B cell (primary cell): ENCODE measurements at regions of chr19 and their contacts with region 1.

Region 1: DNA sequence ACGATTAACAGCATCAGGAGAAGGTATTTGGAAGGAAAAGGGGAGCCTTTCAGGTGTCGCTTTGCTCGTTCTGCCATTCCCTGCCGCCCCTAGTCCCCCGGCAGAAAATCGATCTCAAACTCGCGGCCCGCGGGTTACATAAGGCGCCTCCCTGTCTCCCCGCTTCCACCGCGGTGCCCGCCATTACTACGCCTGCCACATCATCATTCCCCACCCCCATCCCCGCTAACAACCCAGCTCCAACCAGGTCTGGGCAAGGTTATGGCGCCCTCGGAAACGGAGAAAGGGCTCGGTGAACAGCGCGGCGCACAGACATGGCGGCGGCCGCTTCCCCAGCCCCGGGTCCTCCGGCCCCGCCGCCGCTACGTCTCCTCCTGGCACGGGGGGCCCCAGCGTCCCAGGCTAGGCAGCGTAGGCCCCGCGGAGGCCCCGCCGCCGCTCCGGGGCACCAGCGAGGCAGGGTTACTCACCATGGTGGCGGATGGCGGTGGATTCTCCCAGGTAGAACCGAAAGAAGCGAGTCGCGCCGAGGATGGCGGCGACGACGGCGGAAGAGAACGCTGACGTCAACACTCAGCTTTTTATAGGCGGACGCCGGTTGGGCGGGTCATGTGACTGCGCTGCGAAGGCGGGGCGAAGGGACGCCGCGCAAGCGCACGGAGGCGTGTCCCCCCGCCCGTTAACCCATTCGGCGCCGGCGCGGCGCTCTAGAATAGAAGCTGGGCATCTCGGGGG is at the start of gene EEF2:
- DNase-seq: peak; percentile 97
- ATAC-seq: peak; percentile 56
- H3K4me3 ChIP-seq: peak within 1 kb of the TSS; percentile 66 to 93 (median 75)
- H3K4me3 Mint-ChIP-seq: peak within 1 kb of the TSS; percentile 98
- H3K27ac ChIP-seq: peak within 1 kb of the TSS; percentile 78 to 90
- H3K27ac Mint-ChIP-seq: peak within 1 kb of the TSS; percentile 97
- H3K4me1 ChIP-seq: peaks cover 40 to 57% of the 10 kb centered on the region in 2 donors
- H3K4me1 Mint-ChIP-seq: peaks cover 62% of the 10 kb centered on the region
- H3K27me3 ChIP-seq: no peaks in the 10 kb centered on the region
- H3K27me3 Mint-ChIP-seq: no peaks in the 10 kb centered on the region
- CTCF ChIP-seq: no peak
- total RNA-seq, gene EEF2: 2,947 and 3,167 TPM in 2 replicates

Region 2: DNA sequence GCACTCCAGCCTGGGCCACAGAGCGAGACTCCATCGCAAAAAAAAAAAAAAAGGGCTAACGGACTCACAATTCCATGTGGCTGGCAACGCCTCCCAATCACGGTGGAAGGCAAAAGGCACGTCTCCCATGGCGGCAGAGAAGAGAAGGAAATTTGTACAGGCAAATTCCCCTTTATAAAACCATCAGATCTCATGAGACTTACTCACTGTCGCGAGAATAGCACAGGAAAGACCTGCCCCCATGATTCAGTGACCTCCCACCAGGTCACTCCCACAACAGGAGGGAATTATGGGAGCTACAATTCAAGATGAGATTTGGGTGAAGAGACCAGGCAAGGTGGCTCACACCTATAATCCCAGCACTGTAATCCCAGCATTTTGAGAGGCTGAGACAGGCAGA is 70.9 kb before region 1 on chr19:
- CTCF ChIA-PET with region 1: no interaction called
- POLR2A ChIA-PET with region 1: no interaction called
- intact Hi-C with region 1: no loop called
- DNase-seq: no peak
- ATAC-seq: no peak
- H3K4me3 ChIP-seq: no peak overlapping the region
- H3K4me3 Mint-ChIP-seq: no peak overlapping the region
- H3K27ac ChIP-seq: no peak overlapping the region
- H3K27ac Mint-ChIP-seq: no peak overlapping the region
- H3K4me1 ChIP-seq: peaks cover 0 to 4% of the 10 kb centered on the region in 2 donors
- H3K4me1 Mint-ChIP-seq: peaks cover 4% of the 10 kb centered on the region
- H3K27me3 ChIP-seq: no peaks in the 10 kb centered on the region
- H3K27me3 Mint-ChIP-seq: peaks cover 9% of the 10 kb centered on the region
- CTCF ChIP-seq: no peak

Region 3: DNA sequence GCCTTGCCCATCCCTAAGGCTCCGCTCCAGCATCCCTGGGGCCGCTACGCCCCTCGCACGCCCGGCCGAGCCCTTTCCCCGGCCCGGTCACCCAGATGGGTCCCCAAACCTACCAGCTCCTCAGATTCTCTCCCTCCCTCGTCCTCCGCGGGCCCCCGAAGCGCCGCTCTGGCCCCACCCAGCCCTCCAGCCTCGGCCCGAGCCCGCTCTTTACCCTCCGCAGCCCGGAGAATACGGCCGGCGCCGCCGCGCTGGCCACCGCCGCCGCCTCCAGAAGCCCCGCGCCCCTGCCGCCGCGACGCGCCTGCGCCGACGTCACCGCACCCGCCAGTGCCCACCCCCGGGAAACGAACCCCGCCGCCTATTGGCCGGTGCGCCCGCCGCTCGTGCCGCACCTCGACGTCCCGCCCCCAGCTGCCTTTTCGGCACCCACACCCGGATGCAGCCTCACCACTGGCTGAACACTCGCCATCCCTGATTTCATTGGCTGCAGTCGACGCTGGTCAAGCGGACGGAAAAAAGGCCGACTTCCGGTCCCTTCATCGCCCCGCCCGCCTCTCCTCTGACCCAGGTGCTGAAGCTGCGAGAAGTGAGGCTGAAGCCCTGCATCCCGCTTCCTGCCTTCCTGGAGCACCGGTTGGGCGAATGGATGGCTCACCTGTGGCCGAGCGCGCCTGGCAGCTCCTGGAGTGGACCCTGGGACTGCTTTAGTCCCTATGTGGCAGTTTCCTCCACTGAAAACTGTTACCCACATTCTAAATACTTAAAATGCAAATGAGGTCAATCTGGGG is 14.1 kb before region 1 on chr19 and contains the start of gene DAPK3:
- CTCF ChIA-PET with region 1: interaction called, 10 read pairs
- POLR2A ChIA-PET with region 1: interaction called, 20 read pairs
- intact Hi-C with region 1: loop called (anchors 2 kb)
- DNase-seq: peak; percentile 93
- ATAC-seq: peak; percentile 97
- H3K4me3 ChIP-seq: peak within 1 kb of the TSS; percentile 41 to 93 (median 80)
- H3K4me3 Mint-ChIP-seq: peak within 1 kb of the TSS; percentile 94
- H3K27ac ChIP-seq: peak within 1 kb of the TSS; percentile 63 to 85
- H3K27ac Mint-ChIP-seq: peak within 1 kb of the TSS; percentile 91
- H3K4me1 ChIP-seq: peaks cover 14 to 18% of the 10 kb centered on the region in 2 donors
- H3K4me1 Mint-ChIP-seq: peaks cover 25% of the 10 kb centered on the region
- H3K27me3 ChIP-seq: no peaks in the 10 kb centered on the region
- H3K27me3 Mint-ChIP-seq: no peaks in the 10 kb centered on the region
- CTCF ChIP-seq: no peak
- total RNA-seq, gene DAPK3: 41.0 and 47.4 TPM in 2 replicates

Region 4: DNA sequence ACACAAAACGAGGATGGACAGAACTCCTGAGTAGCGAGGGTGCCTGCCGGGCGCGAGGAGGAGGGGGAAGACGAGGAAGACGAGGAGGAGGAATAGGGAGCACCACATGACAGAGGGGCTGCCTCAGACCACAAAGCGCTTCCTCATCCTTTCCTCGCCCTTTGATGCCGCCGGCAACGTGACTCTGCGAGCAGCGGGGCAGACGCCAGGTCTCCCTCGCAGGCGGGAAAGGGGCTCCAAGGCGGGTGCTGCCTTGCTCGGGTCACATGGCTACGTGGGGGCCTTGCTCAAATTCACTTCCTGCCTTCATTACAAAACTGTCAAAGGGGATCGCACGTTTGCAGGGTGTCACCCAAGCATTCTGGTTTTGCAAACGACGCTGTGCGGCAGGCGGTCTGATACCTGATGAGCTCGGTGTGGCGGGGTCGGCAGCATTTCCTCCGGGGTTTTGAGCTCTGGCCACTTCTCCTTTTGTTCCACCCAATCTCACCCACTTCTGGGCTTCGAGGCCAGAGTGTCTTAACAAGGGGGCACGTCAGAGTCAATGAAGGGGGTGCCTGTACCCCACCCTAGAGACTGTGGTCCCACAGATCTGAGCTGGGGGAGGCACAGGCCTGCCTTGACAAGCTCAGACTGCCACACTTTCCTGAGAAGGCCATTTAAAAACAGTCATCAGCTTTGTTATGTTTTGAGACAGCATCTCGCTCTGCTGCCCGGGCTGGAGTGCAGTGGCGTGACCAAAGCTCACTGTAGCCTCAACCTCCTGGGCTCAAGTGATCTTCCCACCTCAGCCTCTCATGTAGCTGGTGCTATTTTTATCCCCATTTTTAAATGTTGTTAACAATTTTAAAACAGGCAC is 123.9 kb after region 1 on chr19:
- CTCF ChIA-PET with region 1: interaction called, 11 read pairs
- POLR2A ChIA-PET with region 1: interaction called, 6 read pairs
- intact Hi-C with region 1: no loop called
- DNase-seq: peak; percentile 93
- ATAC-seq: peak; percentile 87
- H3K4me3 ChIP-seq: peak overlapping the region in 4 of 5 experiments; percentile 34 to 49 (median 40)
- H3K4me3 Mint-ChIP-seq: peak overlapping the region; percentile 88
- H3K27ac ChIP-seq: peak overlapping the region; percentile 82 to 85
- H3K27ac Mint-ChIP-seq: peak overlapping the region; percentile 100
- H3K4me1 ChIP-seq: peaks cover 36 to 55% of the 10 kb centered on the region in 2 donors
- H3K4me1 Mint-ChIP-seq: peaks cover 53% of the 10 kb centered on the region
- H3K27me3 ChIP-seq: no peaks in the 10 kb centered on the region
- H3K27me3 Mint-ChIP-seq: no peaks in the 10 kb centered on the region
- CTCF ChIP-seq: no peak

Region 5: DNA sequence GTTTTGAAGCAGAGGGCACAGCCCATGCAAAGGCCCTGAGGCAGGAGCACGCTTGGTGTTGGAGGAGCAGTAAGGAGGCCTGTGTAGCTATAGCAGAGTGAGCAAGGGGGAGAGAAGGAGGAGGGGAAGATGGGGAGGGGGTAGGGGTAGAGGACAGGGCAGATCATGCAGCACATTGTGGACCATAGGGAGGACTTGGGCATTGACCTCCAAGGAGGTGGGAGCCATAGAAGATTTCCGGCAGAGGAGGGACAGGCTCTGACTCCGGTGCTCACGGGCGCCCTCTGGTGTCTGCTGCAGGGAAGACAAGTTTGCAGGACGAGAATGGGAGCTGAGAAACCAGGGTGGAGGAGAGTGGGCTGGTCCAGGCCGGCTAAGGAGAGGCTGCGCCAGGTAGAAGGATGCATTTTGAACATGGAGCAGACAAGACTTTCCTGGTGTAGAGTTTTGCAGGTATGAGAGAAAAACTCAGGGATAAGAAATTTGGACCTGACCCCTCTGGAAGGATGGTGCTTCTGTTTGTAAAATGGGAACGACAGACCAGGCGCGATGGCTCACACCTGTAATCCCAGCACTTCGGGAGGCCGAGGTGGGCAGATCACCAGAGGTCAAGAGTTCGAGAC is 154.7 kb after region 1 on chr19:
- CTCF ChIA-PET with region 1: interaction called, 50 read pairs
- POLR2A ChIA-PET with region 1: interaction called, 10 read pairs
- intact Hi-C with region 1: loop called (anchors 1 kb)
- DNase-seq: peak; percentile 83
- ATAC-seq: peak; percentile 95
- H3K4me3 ChIP-seq: no peak overlapping the region
- H3K4me3 Mint-ChIP-seq: peak overlapping the region; percentile 40
- H3K27ac ChIP-seq: no peak overlapping the region
- H3K27ac Mint-ChIP-seq: no peak overlapping the region
- H3K4me1 ChIP-seq: peaks cover 5 to 9% of the 10 kb centered on the region in 2 donors
- H3K4me1 Mint-ChIP-seq: peaks cover 9% of the 10 kb centered on the region
- H3K27me3 ChIP-seq: peaks cover 0 to 3% (median under 1%) of the 10 kb centered on the region in 4 experiments
- H3K27me3 Mint-ChIP-seq: peaks cover 3% of the 10 kb centered on the region
- CTCF ChIP-seq: peak; percentile 72

Region 6: GRCh38 chr19:4208385-4209094 is 223.5 kb after region 1 on chr19:
- CTCF ChIA-PET with region 1: interaction called, 8 read pairs
- POLR2A ChIA-PET with region 1: no interaction called
- intact Hi-C with region 1: loop called (anchors 1 kb)
- DNase-seq: no peak
- ATAC-seq: no peak
- H3K4me3 ChIP-seq: no peak overlapping the region
- H3K4me3 Mint-ChIP-seq: no peak overlapping the region
- H3K27ac ChIP-seq: no peak overlapping the region
- H3K27ac Mint-ChIP-seq: no peak overlapping the region
- H3K4me1 ChIP-seq: peaks cover 3 to 4% of the 10 kb centered on the region in 2 donors
- H3K4me1 Mint-ChIP-seq: peaks cover 2% of the 10 kb centered on the region
- H3K27me3 ChIP-seq: peaks cover 0 to 16% (median 0%) of the 10 kb centered on the region in 4 experiments
- H3K27me3 Mint-ChIP-seq: peaks cover 3% of the 10 kb centered on the region
- CTCF ChIP-seq: no peak